ENCODE measurements at regions of chr4 and their contacts with region 1.

Region 1: DNA sequence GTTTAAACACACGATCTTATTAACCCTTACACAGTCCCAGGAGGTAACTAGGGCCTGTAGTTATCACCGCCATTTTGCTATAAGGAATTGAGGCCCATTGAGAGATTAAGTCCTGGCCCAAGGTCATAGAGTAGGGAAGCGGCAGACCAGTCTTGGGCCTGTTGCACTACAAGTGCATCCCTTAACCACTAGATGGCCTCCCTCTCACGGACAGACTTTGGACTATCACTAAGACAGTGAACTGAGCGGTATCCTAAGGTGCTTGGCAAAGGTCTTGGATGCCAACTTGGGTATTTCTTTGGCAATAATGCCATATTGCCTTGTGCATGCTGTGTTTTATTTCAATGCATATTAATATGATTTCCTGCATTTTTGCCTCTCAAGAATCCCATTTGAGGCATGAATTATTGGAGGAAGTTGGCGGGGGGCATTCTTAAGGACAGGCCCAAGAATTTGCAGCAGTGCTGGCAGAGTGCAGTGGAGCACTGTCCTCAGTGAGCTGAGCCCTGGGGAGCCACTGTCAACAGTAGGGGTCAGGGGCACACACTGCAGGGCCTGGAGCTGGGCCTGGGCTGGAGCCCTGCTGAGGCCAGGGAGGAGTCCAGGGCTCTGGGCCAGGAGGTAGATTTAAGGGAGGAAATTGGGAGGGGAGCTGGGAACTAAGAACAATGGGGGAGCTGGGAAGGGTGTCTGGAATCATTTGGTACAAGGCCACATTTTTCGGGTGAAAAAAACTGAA is 147.4 kb downstream of the SMIM20 start:
- DNase-seq: no peak
- H3K4me3 ChIP-seq: no peak overlapping the region
- H3K27ac ChIP-seq: no peak overlapping the region
- H3K4me1 ChIP-seq: no peaks in the 10 kb centered on the region
- H3K27me3 ChIP-seq: no peaks in the 10 kb centered on the region
- CTCF ChIP-seq: peak; percentile 33 to 45
- POLR2A ChIP-seq: no peak

Region 2: DNA sequence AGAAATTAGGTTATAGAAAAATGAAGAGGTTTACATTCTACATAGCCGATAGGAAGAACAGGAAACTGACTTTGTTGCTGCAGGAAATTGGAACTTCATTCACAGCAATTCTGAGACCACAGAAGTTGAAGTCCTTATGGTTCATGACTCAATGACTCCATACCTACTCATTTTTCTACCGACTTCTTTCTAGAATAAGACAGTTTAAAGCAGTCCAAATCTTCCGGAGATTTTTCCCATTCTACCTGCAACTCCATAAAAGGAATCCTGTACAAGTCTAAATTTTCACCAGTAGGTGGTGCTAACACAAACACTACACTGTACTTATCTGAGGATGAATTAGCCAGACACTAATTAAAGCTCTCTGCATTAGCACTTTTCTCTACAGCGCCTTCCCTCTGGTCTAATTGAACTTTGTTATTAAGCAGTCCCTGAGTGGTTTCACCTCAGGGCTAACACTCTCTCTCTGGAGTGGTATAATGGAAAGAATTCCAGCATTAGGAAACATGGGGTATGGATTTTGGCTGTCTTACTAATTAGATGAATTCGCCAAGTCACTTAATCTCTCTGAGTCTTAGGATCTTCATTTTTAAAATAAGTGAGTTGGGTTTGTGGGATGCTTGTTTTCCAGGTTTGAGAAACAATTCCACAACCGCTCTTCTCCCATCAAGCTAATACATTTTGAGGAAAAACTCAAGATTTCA is 20.5 kb after region 1 on chr4:
- CTCF ChIA-PET with region 1: interaction called, 11 read pairs
- POLR2A ChIA-PET with region 1: no interaction called
- dilution Hi-C with region 1: no loop called
- intact Hi-C with region 1: no loop called
- DNase-seq: peak; percentile 58
- H3K4me3 ChIP-seq: no peak overlapping the region
- H3K27ac ChIP-seq: no peak overlapping the region
- H3K4me1 ChIP-seq: no peaks in the 10 kb centered on the region
- H3K27me3 ChIP-seq: peaks cover 0 to 2% of the 10 kb centered on the region in 2 experiments
- CTCF ChIP-seq: peak; percentile 46 to 51
- POLR2A ChIP-seq: no peak

Region 3: DNA sequence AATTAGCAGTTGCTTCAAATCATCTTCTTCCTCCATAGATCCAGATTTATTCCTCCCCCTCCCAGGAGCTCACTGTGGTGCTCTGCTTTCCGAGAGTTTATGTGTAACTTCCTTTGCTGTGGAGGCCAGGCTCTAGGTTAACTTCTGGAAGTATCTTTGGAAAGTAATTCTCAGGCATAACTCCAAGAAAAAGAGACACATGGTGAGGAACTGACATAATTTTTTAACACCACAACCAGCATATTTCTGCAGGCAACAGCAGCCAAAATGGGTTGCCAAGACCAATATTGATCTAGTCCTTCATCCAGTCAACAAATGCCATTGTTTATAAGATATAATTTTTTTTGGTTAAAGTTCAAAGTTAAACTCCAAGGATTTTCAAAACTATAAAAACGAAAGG is 144.9 kb after region 1 on chr4:
- CTCF ChIA-PET with region 1: no interaction called
- POLR2A ChIA-PET with region 1: no interaction called
- dilution Hi-C with region 1: no loop called
- intact Hi-C with region 1: no loop called
- DNase-seq: peak; percentile 48
- H3K4me3 ChIP-seq: no peak overlapping the region
- H3K27ac ChIP-seq: no peak overlapping the region
- H3K4me1 ChIP-seq: no peaks in the 10 kb centered on the region
- H3K27me3 ChIP-seq: no peaks in the 10 kb centered on the region
- CTCF ChIP-seq: no peak
- POLR2A ChIP-seq: no peak

Region 4: DNA sequence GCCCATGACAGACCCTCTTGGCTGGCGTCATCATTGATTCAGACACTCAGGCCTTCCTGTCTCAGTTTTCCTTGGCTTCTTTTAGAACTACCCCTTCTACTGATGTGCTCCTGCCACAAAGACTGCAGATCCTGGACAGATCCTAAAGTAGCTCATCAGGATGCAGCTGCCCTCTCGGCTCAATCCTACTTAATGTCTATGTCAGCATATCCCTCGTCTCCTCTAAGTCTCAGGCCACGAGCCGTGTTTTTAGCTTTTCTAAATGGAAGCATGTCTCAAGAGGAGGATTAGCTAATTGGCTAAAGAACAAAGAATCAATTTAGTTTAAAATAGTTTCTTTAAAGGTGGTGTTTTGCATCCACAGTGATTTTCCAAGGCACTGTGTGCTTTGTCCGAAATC is 1247.0 kb after region 1 on chr4:
- CTCF ChIA-PET with region 1: no interaction called
- POLR2A ChIA-PET with region 1: no interaction called
- dilution Hi-C with region 1: no loop called
- intact Hi-C with region 1: no loop called
- DNase-seq: no peak
- H3K4me3 ChIP-seq: no peak overlapping the region
- H3K27ac ChIP-seq: no peak overlapping the region
- H3K4me1 ChIP-seq: no peaks in the 10 kb centered on the region
- H3K27me3 ChIP-seq: no peaks in the 10 kb centered on the region
- CTCF ChIP-seq: no peak
- POLR2A ChIP-seq: no peak

Measured in endothelial cell of umbilical vein (primary cell).